MCF 10A (cell line): ENCODE measurements at regions of chr16 and their contacts with region 1.

Region 1: DNA sequence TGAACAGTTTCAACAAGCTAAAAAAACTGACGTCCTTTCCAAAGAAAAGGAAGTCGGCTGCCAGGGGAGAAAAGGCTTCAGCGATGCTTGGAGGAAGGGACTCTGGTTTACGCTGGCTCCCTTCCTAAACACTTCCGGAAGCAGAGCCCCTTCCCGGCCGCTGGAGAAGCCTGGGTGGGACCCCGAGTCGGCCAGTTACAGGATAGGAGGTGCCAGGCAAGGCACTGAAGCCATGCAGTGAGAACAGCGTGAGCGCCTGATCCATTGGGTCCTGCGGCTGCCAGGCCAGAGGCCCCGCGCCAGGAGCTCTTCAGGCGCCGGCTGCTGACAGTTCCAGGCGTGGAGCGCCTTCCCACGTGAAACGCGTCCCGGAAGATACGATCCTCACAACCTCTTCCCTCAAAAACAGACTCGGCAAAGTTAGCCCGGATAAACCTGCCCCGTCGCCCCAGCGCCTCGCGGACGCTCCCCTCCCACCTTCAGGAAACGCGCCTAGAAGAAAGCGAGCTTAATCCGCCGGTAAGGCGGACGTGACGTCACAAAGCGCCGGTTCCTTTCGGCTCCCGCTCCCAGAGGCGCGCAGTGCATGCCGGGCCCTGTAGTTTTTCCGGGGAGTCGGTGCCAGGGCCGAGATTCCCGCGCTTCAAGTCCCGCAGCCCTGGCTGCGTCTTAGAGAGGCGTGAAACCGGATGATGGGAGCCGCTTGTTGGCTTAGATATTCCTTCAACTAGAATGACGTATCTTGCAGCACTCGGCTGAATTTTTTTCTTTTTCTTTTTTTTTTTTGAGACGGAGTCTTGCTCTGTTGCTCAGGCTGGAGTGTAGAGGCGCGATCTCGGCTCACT is at the start of gene ADAT1:
- DNase-seq: peak; percentile 98
- H3K4me3 Mint-ChIP-seq: peak within 1 kb of the TSS; percentile 84
- H3K27ac Mint-ChIP-seq: peak within 1 kb of the TSS; percentile 72
- H3K4me1 Mint-ChIP-seq: peaks cover 25% of the 10 kb centered on the region
- H3K27me3 Mint-ChIP-seq: no peaks in the 10 kb centered on the region
- CTCF ChIP-seq: no peak
- total RNA-seq, gene ADAT1: 48.7 and 60.2 TPM in 2 replicates

Region 2: DNA sequence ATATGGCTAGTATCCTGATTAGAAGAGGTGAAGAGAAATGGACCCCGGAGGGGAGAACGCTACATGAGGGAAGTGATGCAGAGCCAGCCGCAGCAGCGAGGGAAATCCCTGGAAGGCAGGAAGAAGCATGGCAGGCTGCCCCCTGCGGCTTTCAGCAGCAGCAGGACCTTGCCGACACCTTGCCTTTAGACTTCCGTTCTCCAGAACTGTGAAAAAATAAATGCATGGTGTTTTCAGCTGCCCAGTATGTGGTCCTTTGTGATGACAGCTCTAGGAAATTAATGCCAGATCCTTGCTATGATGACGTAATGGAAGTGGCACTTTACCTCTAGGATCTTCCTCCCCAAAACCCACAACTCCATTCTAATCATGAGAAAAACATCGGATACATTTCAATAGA is 484.3 kb before region 1 on chr16:
- CTCF ChIA-PET with region 1: no interaction called
- POLR2A ChIA-PET with region 1: no interaction called
- intact Hi-C with region 1: no loop called
- DNase-seq: no peak
- H3K4me3 Mint-ChIP-seq: no peak overlapping the region
- H3K27ac Mint-ChIP-seq: no peak overlapping the region
- H3K4me1 Mint-ChIP-seq: no peaks in the 10 kb centered on the region
- H3K27me3 Mint-ChIP-seq: no peaks in the 10 kb centered on the region
- CTCF ChIP-seq: no peak

Region 3: GRCh38 chr16:75206749-75207451 is 416.1 kb before region 1 on chr16 and contains the start of gene CTRB2:
- CTCF ChIA-PET with region 1: no interaction called
- POLR2A ChIA-PET with region 1: no interaction called
- intact Hi-C with region 1: loop called (anchors 10 kb)
- DNase-seq: no peak
- H3K4me3 Mint-ChIP-seq: no peak within 1 kb of the TSS
- H3K27ac Mint-ChIP-seq: no peak within 1 kb of the TSS
- H3K4me1 Mint-ChIP-seq: no peaks in the 10 kb centered on the region
- H3K27me3 Mint-ChIP-seq: no peaks in the 10 kb centered on the region
- CTCF ChIP-seq: no peak
- total RNA-seq, gene CTRB2: not detected in 2 replicates

Region 4: GRCh38 chr16:75471723-75472633 is 151.0 kb before region 1 on chr16:
- CTCF ChIA-PET with region 1: interaction called, 19 read pairs
- POLR2A ChIA-PET with region 1: interaction called, 3 read pairs
- intact Hi-C with region 1: loop called (anchors 1 kb)
- DNase-seq: peak; percentile 74
- H3K4me3 Mint-ChIP-seq: no peak overlapping the region
- H3K27ac Mint-ChIP-seq: no peak overlapping the region
- H3K4me1 Mint-ChIP-seq: peaks cover 9% of the 10 kb centered on the region
- H3K27me3 Mint-ChIP-seq: no peaks in the 10 kb centered on the region
- CTCF ChIP-seq: peak; percentile 77

Region 5: GRCh38 chr16:75555707-75556430 is 67.1 kb before region 1 on chr16 and contains the start of gene TMEM231:
- CTCF ChIA-PET with region 1: interaction called, 4 read pairs
- POLR2A ChIA-PET with region 1: interaction called, 26 read pairs
- intact Hi-C with region 1: no loop called
- DNase-seq: peak; percentile 94
- H3K4me3 Mint-ChIP-seq: peak within 1 kb of the TSS; percentile 85
- H3K27ac Mint-ChIP-seq: peak within 1 kb of the TSS; percentile 91
- H3K4me1 Mint-ChIP-seq: peaks cover 6% of the 10 kb centered on the region
- H3K27me3 Mint-ChIP-seq: no peaks in the 10 kb centered on the region
- CTCF ChIP-seq: no peak
- total RNA-seq, gene TMEM231: 18.6 and 21.1 TPM in 2 replicates

Region 6: DNA sequence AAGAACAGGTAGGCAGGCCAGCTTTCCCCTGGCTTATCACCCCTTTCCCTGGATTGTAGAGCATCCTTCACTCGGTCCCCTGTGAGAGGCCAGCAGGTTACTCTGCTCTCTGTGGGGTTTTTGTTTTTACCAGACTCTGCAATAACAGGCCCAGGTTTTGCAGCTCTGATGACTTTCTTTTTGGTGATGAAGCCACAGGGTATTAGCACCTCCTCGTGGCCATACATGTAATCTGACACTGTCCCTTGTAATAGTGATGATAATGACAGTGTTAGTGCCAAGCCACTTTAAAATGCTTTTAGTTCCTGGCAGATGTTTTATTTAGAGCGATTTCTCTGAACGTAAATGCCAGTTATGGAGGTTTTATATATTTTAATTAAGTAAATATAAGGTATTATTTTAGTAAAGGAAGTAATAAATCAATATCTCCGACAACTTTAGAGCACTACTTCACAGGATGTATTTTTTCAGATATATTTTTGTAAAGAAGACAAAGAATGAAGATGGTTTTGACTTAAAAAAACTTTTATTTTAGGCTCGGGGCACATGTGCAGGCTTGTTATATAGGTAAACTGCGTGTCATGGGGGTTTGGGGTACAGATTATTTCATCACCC is 141.3 kb after region 1 on chr16:
- CTCF ChIA-PET with region 1: interaction called, 5 read pairs
- POLR2A ChIA-PET with region 1: interaction called, 5 read pairs
- intact Hi-C with region 1: loop called (anchors 1 kb)
- DNase-seq: peak; percentile 75
- H3K4me3 Mint-ChIP-seq: no peak overlapping the region
- H3K27ac Mint-ChIP-seq: no peak overlapping the region
- H3K4me1 Mint-ChIP-seq: peaks cover 5% of the 10 kb centered on the region
- H3K27me3 Mint-ChIP-seq: peaks cover 13% of the 10 kb centered on the region
- CTCF ChIP-seq: peak; percentile 67

Region 7: GRCh38 chr16:75789237-75789636 is 166.3 kb after region 1 on chr16:
- CTCF ChIA-PET with region 1: no interaction called
- POLR2A ChIA-PET with region 1: no interaction called
- intact Hi-C with region 1: no loop called
- DNase-seq: peak; percentile 69
- H3K4me3 Mint-ChIP-seq: no peak overlapping the region
- H3K27ac Mint-ChIP-seq: no peak overlapping the region
- H3K4me1 Mint-ChIP-seq: no peaks in the 10 kb centered on the region
- H3K27me3 Mint-ChIP-seq: no peaks in the 10 kb centered on the region
- CTCF ChIP-seq: peak; percentile 67